ENCODE measurements at regions of chr22 and their contacts with region 1.

Region 1: GRCh38 chr22:24423519-24424000 is 3.8 kb upstream of the ADORA2A start:
- DNase-seq: peak; percentile 82
- ATAC-seq: peak; percentile 36

Region 2: DNA sequence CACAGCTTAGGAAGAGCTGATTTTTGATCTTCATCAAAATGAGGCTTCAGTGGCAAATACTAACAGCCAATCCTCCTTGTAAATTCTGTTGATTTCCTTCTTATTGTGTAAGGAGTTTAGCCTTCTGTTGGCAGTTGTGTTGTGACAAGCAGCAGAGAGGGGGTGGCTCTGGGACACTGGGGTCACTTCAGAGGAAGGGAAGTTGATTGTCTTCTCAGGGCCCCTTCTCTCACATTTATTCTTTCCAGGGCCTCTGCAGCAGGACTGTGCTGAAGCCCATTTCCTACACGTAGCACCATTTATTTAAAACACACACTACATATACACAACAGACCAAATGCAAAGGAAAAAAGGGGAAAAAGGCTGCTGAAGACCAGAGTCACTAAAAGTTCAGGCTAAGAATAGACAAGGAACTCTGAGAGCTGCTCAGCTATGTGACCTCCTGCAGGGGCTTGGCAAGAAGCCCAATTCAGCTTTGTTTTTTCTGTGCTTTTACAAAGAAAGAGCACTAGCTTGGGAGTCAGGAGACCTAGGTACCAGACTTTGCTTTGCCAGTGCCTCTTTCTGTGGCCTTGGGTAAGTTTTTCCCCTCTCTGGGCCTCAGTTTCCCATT is 43.3 kb after region 1 on chr22:
- intact Hi-C with region 1: loop called (anchors 2 kb)
- DNase-seq: no peak
- ATAC-seq: peak; percentile 62

Region 3: GRCh38 chr22:24494528-24495364 is 71.2 kb after region 1 on chr22 and contains the start of gene UPB1:
- intact Hi-C with region 1: no loop called
- DNase-seq: no peak
- ATAC-seq: peak; percentile 60
- total RNA-seq, gene UPB1: 1.3 TPM

Region 4: GRCh38 chr22:24516301-24516737 is 92.8 kb after region 1 on chr22:
- intact Hi-C with region 1: loop called (anchors 10 kb)
- DNase-seq: no peak
- ATAC-seq: peak; percentile 53

Measured in sciatic nerve (tissue), 2 donors.